AG04449 (cell line): ENCODE measurements at regions of chr7 and their contacts with region 1.

Region 1: GRCh38 chr7:140653319-140654108 is 12.9 kb upstream of the DENND2A start:
- DNase-seq: no peak
- H3K4me3 ChIP-seq: no peak overlapping the region
- CTCF ChIP-seq: peak; percentile 76

Region 2: GRCh38 chr7:140479062-140479738 is 174.3 kb before region 1 on chr7 and contains the start of gene MKRN1:
- CTCF ChIA-PET with region 1: interaction called, 37 read pairs
- POLR2A ChIA-PET with region 1: no interaction called
- DNase-seq: peak; percentile 47
- H3K4me3 ChIP-seq: peak within 1 kb of the TSS; percentile 81
- CTCF ChIP-seq: no peak

Region 3: GRCh38 chr7:140506788-140507464 is 146.6 kb before region 1 on chr7:
- CTCF ChIA-PET with region 1: interaction called, 25 read pairs
- POLR2A ChIA-PET with region 1: no interaction called
- DNase-seq: peak; percentile 68
- H3K4me3 ChIP-seq: no peak overlapping the region
- CTCF ChIP-seq: peak; percentile 20

Region 4: DNA sequence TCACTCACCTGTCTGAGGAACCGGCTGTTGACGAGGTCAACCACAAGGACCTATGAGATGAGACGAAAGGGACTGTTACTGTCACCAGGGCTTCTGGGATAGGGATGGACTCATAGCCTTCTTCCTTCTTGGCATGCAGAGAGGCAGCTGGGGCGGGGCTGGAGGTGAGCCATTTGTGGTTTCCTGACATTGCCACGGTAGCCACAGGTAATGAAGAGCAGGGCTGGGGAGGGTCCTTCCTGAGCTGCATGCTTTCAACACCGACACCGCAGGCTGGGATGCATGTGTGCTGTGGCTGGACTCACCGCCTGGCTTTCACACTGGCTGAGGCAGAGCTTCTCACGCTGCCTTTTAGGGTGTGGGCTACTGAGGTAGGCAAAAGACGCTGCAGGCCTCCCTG is 127.8 kb before region 1 on chr7:
- CTCF ChIA-PET with region 1: interaction called, 309 read pairs
- POLR2A ChIA-PET with region 1: no interaction called
- DNase-seq: no peak
- H3K4me3 ChIP-seq: no peak overlapping the region
- CTCF ChIP-seq: no peak

Region 5: GRCh38 chr7:140640727-140641523 is 12.6 kb before region 1 on chr7 and contains the start of gene DENND2A:
- CTCF ChIA-PET with region 1: interaction called, 18 read pairs
- POLR2A ChIA-PET with region 1: no interaction called
- DNase-seq: no peak
- H3K4me3 ChIP-seq: peak within 1 kb of the TSS; percentile 68
- CTCF ChIP-seq: no peak